ENCODE measurements at regions of chr3 and their contacts with region 1.

Region 1: GRCh38 chr3:189967254-189967865 is 153.3 kb downstream of the P3H2 start:
- DNase-seq: peak in 4 of 14 experiments; percentile 10 to 66 (median 54)
- ATAC-seq: no peak
- H3K4me3 ChIP-seq: no peak overlapping the region
- H3K4me3 Mint-ChIP-seq: no peak overlapping the region
- H3K27ac ChIP-seq: no peak overlapping the region
- H3K27ac Mint-ChIP-seq: no peak overlapping the region
- H3K4me1 ChIP-seq: no peaks in the 10 kb centered on the region
- H3K4me1 Mint-ChIP-seq: no peaks in the 10 kb centered on the region
- H3K27me3 ChIP-seq: no peaks in the 10 kb centered on the region
- H3K27me3 Mint-ChIP-seq: no peaks in the 10 kb centered on the region
- CTCF ChIP-seq: peak; percentile 95

Region 2: GRCh38 chr3:190321789-190322603 is 354.6 kb after region 1 on chr3 and contains the start of gene CLDN1:
- CTCF ChIA-PET with region 1: interaction called, 7 read pairs
- POLR2A ChIA-PET with region 1: no interaction called
- intact Hi-C with region 1: loop called (anchors 1 to 2 kb)
- DNase-seq: peak; percentile 51 to 82 (median 64)
- ATAC-seq: peak; percentile 85
- H3K4me3 ChIP-seq: peak within 1 kb of the TSS; percentile 53
- H3K4me3 Mint-ChIP-seq: peak within 1 kb of the TSS; percentile 71
- H3K27ac ChIP-seq: no peak within 1 kb of the TSS
- H3K27ac Mint-ChIP-seq: no peak within 1 kb of the TSS
- H3K4me1 ChIP-seq: peaks cover 16% of the 10 kb centered on the region
- H3K4me1 Mint-ChIP-seq: peaks cover 16% of the 10 kb centered on the region
- H3K27me3 ChIP-seq: peaks cover 0 to 13% of the 10 kb centered on the region in 2 experiments
- H3K27me3 Mint-ChIP-seq: peaks cover 42% of the 10 kb centered on the region
- CTCF ChIP-seq: peak; percentile 87
- total RNA-seq, gene CLDN1: 0.80 to 0.95 TPM

Region 3: GRCh38 chr3:190424478-190425439 is 457.4 kb after region 1 on chr3:
- CTCF ChIA-PET with region 1: no interaction called
- POLR2A ChIA-PET with region 1: no interaction called
- intact Hi-C with region 1: loop called (anchors 1 to 10 kb)
- DNase-seq: peak in 6 of 14 experiments; percentile 2 to 66 (median 36)
- ATAC-seq: peak; percentile 55
- H3K4me3 ChIP-seq: no peak overlapping the region
- H3K4me3 Mint-ChIP-seq: peak overlapping the region; percentile 57
- H3K27ac ChIP-seq: no peak overlapping the region
- H3K27ac Mint-ChIP-seq: peak overlapping the region; percentile 73
- H3K4me1 ChIP-seq: peaks cover 3% of the 10 kb centered on the region
- H3K4me1 Mint-ChIP-seq: peaks cover 6% of the 10 kb centered on the region
- H3K27me3 ChIP-seq: no peaks in the 10 kb centered on the region
- H3K27me3 Mint-ChIP-seq: peaks cover 5% of the 10 kb centered on the region
- CTCF ChIP-seq: peak; percentile 67

Region 4: GRCh38 chr3:191051037-191051436 is 1083.7 kb after region 1 on chr3:
- CTCF ChIA-PET with region 1: no interaction called
- POLR2A ChIA-PET with region 1: no interaction called
- intact Hi-C with region 1: loop called in 1 of 2 experiments (anchors 5 kb)
- DNase-seq: no peak
- ATAC-seq: no peak
- H3K4me3 ChIP-seq: no peak overlapping the region
- H3K4me3 Mint-ChIP-seq: no peak overlapping the region
- H3K27ac ChIP-seq: no peak overlapping the region
- H3K27ac Mint-ChIP-seq: no peak overlapping the region
- H3K4me1 ChIP-seq: no peaks in the 10 kb centered on the region
- H3K4me1 Mint-ChIP-seq: no peaks in the 10 kb centered on the region
- H3K27me3 ChIP-seq: no peaks in the 10 kb centered on the region
- H3K27me3 Mint-ChIP-seq: no peaks in the 10 kb centered on the region
- CTCF ChIP-seq: peak; percentile 14